PC-9 (cell line): ENCODE measurements at regions of chr1 and their contacts with region 1.

Region 1: GRCh38 chr1:239814303-239814881 is 277.3 kb upstream of the FMN2 start:
- DNase-seq: peak; percentile 75 to 95
- H3K4me3 ChIP-seq: peak overlapping the region; percentile 40; the same call in 1 of the 2 replicates
- H3K27ac ChIP-seq: peak overlapping the region; percentile 87
- H3K4me1 ChIP-seq: peaks cover 41% of the 10 kb centered on the region
- H3K27me3 ChIP-seq: no peaks in the 10 kb centered on the region
- CTCF ChIP-seq: no peak

Region 2: GRCh38 chr1:239858058-239858457 is 43.7 kb after region 1 on chr1:
- CTCF ChIA-PET with region 1: interaction called, 9 read pairs
- POLR2A ChIA-PET with region 1: interaction called, 4 read pairs
- intact Hi-C with region 1: loop called (anchors 1 kb)
- DNase-seq: peak; percentile 43 to 86
- H3K4me3 ChIP-seq: peak overlapping the region; percentile 4; the same call in 1 of the 2 replicates
- H3K27ac ChIP-seq: peak overlapping the region; percentile 75
- H3K4me1 ChIP-seq: peaks cover 34% of the 10 kb centered on the region
- H3K27me3 ChIP-seq: no peaks in the 10 kb centered on the region
- CTCF ChIP-seq: no peak

Region 3: DNA sequence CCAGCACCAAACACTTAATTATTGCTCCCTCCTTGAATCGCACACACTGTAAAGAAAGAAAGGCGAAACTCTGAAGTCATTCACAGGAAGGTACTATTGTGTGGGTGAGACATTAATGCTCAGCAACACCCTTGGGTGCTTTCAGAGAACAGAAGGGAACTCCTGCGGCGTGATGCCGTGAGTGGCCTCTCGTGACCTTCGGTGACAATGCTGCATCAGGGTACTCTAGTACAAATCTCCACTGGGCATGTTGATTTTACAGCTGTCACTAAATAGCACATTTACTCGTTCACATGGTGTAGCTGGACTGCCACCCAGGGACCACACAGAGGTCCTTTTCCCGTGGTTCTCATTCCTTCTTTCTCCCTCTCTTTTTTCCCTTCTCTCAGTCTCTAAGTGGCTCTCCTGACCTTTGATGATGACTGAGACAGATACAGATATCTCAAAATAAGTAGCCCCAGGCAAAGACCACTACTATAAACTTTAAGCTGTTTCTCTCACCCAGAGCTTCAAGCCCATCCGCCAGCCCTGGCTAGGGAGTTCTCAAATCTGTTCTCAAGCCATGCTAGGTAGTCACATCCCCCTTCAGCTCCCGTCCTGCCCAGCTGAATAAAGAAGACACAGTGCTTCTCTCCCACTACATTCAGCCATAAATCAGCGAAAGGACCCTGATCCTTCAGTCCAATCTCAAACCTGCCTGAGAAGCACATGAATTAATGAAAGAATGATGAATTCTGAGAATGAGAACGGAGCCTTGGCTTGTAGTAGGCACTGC is 53.9 kb after region 1 on chr1:
- CTCF ChIA-PET with region 1: no interaction called
- POLR2A ChIA-PET with region 1: no interaction called
- intact Hi-C with region 1: no loop called
- DNase-seq: no peak
- H3K4me3 ChIP-seq: no peak overlapping the region
- H3K27ac ChIP-seq: no peak overlapping the region
- H3K4me1 ChIP-seq: no peaks in the 10 kb centered on the region
- H3K27me3 ChIP-seq: no peaks in the 10 kb centered on the region
- CTCF ChIP-seq: no peak

Region 4: DNA sequence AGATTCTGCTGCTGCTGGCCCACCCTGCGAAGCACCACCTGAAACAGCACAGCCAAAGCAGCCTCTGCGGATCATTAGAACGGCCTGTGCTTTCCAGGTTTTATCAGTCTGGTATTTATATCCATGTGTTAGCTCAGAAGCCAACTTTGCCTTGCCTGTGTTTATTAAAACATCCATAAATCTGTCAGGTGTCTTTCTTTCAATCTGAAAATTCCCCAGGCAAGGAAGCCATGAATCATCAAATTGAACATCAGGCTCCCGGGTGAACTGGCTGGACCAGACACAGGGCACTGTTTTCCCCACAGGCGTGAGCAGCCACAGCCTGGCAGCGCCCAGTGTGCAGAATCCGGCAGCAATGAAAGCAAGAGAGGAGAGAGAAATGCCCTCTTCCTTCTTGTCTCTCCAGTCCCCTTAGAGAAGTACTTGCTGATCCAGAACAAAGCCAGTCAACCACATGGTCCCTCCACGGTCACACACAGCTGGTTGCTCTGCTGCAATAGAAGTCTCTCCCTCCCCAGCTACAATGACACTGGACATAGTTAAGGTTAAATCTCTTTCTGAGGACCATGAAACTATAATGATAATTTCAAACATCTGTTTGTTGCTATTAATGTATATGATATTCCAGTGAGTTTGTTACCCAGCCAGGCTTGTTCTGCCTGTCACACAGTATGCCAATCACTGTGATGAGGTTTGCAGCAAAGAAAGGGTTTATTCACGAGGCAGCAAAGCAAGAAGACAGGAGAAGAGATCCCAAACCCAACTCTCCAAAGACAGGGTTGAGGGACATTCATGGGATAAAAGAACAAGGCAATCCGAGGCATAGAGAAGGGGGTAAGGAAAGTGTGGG is 65.2 kb after region 1 on chr1:
- CTCF ChIA-PET with region 1: no interaction called
- POLR2A ChIA-PET with region 1: no interaction called
- intact Hi-C with region 1: loop called (anchors 5 kb)
- DNase-seq: peak; percentile 59 to 80
- H3K4me3 ChIP-seq: no peak overlapping the region
- H3K27ac ChIP-seq: no peak overlapping the region
- H3K4me1 ChIP-seq: peaks cover 17% of the 10 kb centered on the region
- H3K27me3 ChIP-seq: no peaks in the 10 kb centered on the region
- CTCF ChIP-seq: no peak